Natural killer cell (primary cell): ENCODE measurements at regions of chr2 and their contacts with region 1.

Region 1: DNA sequence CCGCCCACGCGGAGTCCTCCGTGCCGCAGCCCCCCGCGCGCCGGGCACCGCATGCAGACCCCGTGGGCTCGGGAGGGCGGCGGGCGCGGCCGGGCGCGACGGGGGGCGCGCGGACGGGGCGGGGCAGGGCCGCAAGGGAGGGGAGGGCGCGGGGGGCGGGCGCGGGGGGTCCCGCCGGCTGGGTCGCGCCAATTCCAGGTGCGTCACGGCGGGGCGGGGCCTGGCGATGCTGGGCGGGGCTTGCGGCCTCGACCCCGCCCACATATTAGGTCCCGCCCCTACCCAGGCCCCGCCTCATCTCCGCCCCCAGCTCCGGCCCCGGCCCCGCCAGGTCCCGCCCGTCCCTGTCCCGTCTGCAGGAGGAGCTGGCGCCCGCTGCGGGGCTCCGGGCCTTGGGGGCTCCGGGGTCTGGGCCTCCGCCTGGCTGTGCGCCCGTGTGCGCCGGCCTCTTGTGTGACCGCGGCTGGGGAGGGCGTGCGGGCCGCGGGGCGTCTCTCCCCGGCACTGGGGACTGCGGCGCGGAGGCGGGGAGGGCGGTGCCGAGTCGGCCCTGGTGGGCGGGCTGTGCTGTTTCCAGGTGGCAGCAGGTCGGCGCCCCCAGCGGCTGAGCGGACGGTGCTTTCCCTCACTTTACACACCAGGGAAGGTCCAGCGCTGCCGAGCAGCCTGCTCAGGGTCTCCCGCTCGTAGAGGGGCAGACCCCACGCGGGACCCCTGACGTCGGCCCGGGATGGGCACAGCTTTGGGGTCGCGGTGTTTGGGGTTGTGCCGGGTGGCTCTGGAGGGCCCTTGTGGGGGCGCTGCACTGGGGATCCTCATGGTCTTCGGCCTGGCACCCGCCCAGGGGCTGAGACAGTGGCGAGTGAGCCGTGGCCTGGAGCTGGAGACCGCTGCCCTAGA is 543 bp downstream of the ING5 start:
- DNase-seq: peak; percentile 86 to 93
- ATAC-seq: peak; percentile 81 to 94 (median 85)
- H3K4me3 ChIP-seq: peak overlapping the region; percentile 59
- H3K4me3 Mint-ChIP-seq: peak overlapping the region; percentile 86
- H3K27ac ChIP-seq: peak overlapping the region; percentile 76
- H3K27ac Mint-ChIP-seq: peak overlapping the region; percentile 80 to 84
- H3K4me1 ChIP-seq: peaks cover 15% of the 10 kb centered on the region
- H3K4me1 Mint-ChIP-seq: peaks cover 7 to 13% of the 10 kb centered on the region in 2 donors
- H3K27me3 ChIP-seq: no peaks in the 10 kb centered on the region
- H3K27me3 Mint-ChIP-seq: no peaks in the 10 kb centered on the region
- CTCF ChIP-seq: peak; percentile 52

Region 2: DNA sequence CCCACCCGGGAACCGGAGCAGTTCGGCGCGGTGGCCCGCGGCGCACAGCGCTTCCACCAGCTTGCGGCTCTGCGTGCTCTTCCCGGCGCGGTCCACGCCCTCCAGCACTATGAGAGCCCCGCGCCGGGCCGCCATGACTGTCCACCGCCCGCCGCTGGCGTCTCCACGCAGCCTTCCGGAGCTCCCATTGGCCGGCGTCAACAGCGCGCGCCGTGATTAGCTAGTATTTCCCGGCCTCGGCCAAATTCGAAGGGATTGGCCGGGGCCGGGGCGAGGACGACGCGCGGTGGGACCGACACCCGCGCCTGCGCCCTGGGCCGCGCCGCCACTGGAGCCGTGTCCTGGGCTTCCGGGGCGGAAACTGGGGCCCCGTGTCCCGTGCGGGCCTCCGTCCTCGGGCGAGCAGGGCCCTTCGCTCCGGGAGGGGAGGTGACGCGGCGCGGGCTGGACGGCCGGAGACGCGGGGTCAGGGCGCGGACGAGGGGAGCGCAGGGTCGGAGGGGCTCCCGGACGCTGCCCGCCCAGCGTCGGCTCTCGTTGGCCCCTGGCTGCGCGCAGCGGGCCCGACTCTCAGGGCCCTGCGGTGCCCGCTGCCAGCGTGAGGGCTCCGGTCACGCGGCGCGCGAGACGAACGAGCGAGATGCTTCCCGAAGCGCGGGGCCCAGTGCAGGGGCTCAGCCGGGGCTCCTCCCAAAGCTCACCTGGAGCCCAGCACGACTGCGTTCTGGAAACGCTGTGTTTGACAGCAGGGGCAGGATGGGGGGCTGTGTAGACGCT is 15.5 kb before region 1 on chr2 and contains the start of gene DTYMK:
- intact Hi-C with region 1: loop called (anchors 1 kb)
- DNase-seq: peak; percentile 96 to 97
- ATAC-seq: peak; percentile 93 to 98 (median 93)
- H3K4me3 ChIP-seq: peak within 1 kb of the TSS; percentile 84
- H3K4me3 Mint-ChIP-seq: peak within 1 kb of the TSS; percentile 94
- H3K27ac ChIP-seq: peak within 1 kb of the TSS; percentile 55
- H3K27ac Mint-ChIP-seq: peak within 1 kb of the TSS; percentile 87 to 88
- H3K4me1 ChIP-seq: peaks cover 18% of the 10 kb centered on the region
- H3K4me1 Mint-ChIP-seq: peaks cover 26 to 28% of the 10 kb centered on the region in 2 donors
- H3K27me3 ChIP-seq: no peaks in the 10 kb centered on the region
- H3K27me3 Mint-ChIP-seq: no peaks in the 10 kb centered on the region
- CTCF ChIP-seq: no peak
- total RNA-seq, gene DTYMK: 15.4 to 17.5 (median 15.6) TPM

Region 3: DNA sequence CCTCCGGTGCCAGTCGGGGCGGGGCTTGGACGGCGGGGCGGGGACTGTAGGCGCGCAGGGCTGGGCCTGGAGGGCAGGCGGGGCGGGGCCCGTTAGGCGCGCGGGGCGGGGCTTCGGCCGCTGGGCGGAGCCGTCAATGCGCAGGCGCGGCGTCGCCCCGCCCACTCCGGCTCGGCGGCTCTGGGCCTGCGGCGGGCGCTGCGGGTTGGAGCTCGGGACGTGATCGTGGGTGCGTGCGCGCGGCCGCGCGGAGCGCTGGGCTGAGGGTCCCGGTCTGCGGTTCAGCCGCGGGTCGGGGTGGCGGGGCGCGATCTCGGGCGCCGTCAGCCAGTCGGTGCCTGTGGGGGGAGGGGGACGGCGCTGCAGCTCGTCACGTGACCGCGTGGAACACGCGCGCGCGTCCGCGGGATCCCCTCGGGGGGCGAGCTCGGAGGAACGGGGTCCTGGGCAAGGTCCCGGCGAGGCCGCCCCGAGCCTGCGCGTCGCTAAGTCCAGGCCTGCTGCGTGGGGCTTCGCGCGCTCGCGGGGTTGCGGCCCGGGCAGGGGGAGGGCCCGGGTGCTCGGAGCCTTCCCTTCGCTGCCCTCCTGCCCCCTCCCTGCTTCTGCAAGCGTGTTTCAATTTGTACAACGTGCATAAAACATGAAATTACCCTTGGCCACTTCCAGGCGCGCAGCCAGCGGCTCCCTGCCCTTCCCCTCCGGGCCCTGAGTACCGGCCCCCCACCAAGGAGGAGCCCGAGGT is 32.3 kb after region 1 on chr2 and contains the start of gene D2HGDH:
- intact Hi-C with region 1: loop called (anchors 1 kb)
- DNase-seq: peak; percentile 94
- ATAC-seq: peak; percentile 93 to 98 (median 95)
- H3K4me3 ChIP-seq: peak within 1 kb of the TSS; percentile 80
- H3K4me3 Mint-ChIP-seq: peak within 1 kb of the TSS; percentile 80
- H3K27ac ChIP-seq: peak within 1 kb of the TSS; percentile 73
- H3K27ac Mint-ChIP-seq: peak within 1 kb of the TSS; percentile 31 to 65
- H3K4me1 ChIP-seq: peaks cover 34% of the 10 kb centered on the region
- H3K4me1 Mint-ChIP-seq: peaks cover 20 to 30% of the 10 kb centered on the region in 2 donors
- H3K27me3 ChIP-seq: no peaks in the 10 kb centered on the region
- H3K27me3 Mint-ChIP-seq: no peaks in the 10 kb centered on the region
- CTCF ChIP-seq: no peak
- total RNA-seq, gene D2HGDH: 28.9 to 45.5 (median 43.4) TPM

Region 4: GRCh38 chr2:241892299-241893137 is 190.1 kb after region 1 on chr2:
- intact Hi-C with region 1: no loop called
- DNase-seq: no peak
- ATAC-seq: peak in 1 of 3 donors; percentile 49
- H3K4me3 ChIP-seq: no peak overlapping the region
- H3K4me3 Mint-ChIP-seq: no peak overlapping the region
- H3K27ac ChIP-seq: no peak overlapping the region
- H3K27ac Mint-ChIP-seq: no peak overlapping the region
- H3K4me1 ChIP-seq: peaks cover 22% of the 10 kb centered on the region
- H3K4me1 Mint-ChIP-seq: peaks cover 15 to 16% of the 10 kb centered on the region in 2 donors
- H3K27me3 ChIP-seq: no peaks in the 10 kb centered on the region
- H3K27me3 Mint-ChIP-seq: no peaks in the 10 kb centered on the region
- CTCF ChIP-seq: no peak